Adrenal gland (tissue), 19 donors: ENCODE measurements at regions of chr14 and their contacts with region 1.

Region 1: GRCh38 chr14:55430024-55430690 is 10.3 kb downstream of the TBPL2 start:
- DNase-seq: peak in 4 of 7 donors; percentile 41 to 64 (median 45)
- H3K4me3 ChIP-seq: no peak overlapping the region
- H3K27ac ChIP-seq: no peak overlapping the region
- H3K4me1 ChIP-seq: no peaks in the 10 kb centered on the region
- H3K27me3 ChIP-seq: no peaks in the 10 kb centered on the region
- CTCF ChIP-seq: peak; percentile 27 to 48 (median 44)
- POLR2A ChIP-seq: no peak

Region 2: GRCh38 chr14:55245657-55246268 is 184.4 kb before region 1 on chr14:
- intact Hi-C with region 1: loop called (anchors 10 kb)
- DNase-seq: peak in 4 of 7 donors; percentile 25 to 53 (median 28)
- H3K4me3 ChIP-seq: no peak overlapping the region
- H3K27ac ChIP-seq: no peak overlapping the region
- H3K4me1 ChIP-seq: no peaks in the 10 kb centered on the region
- H3K27me3 ChIP-seq: peaks cover 4% of the 10 kb centered on the region
- CTCF ChIP-seq: peak; percentile 27 to 64 (median 44)
- POLR2A ChIP-seq: no peak

Region 3: DNA sequence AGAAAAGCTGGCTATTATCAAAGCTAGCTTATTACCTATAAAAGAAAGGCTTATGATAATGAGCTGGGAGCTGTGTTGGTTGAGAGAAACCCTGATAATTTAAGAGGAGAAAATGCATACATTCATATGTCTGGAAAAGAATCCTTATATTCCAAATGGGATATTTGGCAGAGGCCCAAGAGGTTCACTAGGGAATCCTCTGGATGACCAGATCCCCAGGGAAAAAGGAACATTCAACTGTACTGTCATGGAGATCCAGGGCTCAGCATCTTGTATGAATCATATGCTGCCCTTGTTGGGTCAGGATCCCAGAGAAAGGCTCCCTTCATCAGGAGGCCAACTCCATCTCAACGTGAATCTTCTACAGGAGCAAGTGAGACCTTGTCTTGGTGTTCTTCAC is 175.6 kb before region 1 on chr14:
- intact Hi-C with region 1: loop called (anchors 10 kb)
- DNase-seq: no peak
- H3K4me3 ChIP-seq: no peak overlapping the region
- H3K27ac ChIP-seq: no peak overlapping the region
- H3K4me1 ChIP-seq: no peaks in the 10 kb centered on the region
- H3K27me3 ChIP-seq: no peaks in the 10 kb centered on the region
- CTCF ChIP-seq: no peak
- POLR2A ChIP-seq: no peak

Region 4: GRCh38 chr14:55416866-55417265 is 13.3 kb before region 1 on chr14:
- intact Hi-C with region 1: no loop called
- DNase-seq: no peak
- H3K4me3 ChIP-seq: no peak overlapping the region
- H3K27ac ChIP-seq: no peak overlapping the region
- H3K4me1 ChIP-seq: peaks cover 5% of the 10 kb centered on the region in 2 donors
- H3K27me3 ChIP-seq: no peaks in the 10 kb centered on the region
- CTCF ChIP-seq: peak in 3 of 6 experiments; percentile 4 to 12 (median 7)
- POLR2A ChIP-seq: no peak